Activated T-helper 2 cell treated with anti-CD3 and anti-CD28 coated beads, Interferon-gamma antibody, Interleukin-2, Interleukin-4, amounts not matched to agents 10 μg/mL and 5 μg/mL and 100 μg/mL, durations not matched to agents 14 hours and 24 hours and 36 hours (primary cell): ENCODE measurements at regions of chr3 and their contacts with region 1.

Region 1: GRCh38 chr3:48663415-48664312 is 978 bp upstream of the CELSR3 start:
- DNase-seq: peak; percentile 94
- H3K4me3 Mint-ChIP-seq: peak overlapping the region; percentile 90
- H3K27ac Mint-ChIP-seq: peak overlapping the region; percentile 99
- H3K4me1 Mint-ChIP-seq: peaks cover 10% of the 10 kb centered on the region
- H3K27me3 Mint-ChIP-seq: peaks cover 8% of the 10 kb centered on the region

Region 2: DNA sequence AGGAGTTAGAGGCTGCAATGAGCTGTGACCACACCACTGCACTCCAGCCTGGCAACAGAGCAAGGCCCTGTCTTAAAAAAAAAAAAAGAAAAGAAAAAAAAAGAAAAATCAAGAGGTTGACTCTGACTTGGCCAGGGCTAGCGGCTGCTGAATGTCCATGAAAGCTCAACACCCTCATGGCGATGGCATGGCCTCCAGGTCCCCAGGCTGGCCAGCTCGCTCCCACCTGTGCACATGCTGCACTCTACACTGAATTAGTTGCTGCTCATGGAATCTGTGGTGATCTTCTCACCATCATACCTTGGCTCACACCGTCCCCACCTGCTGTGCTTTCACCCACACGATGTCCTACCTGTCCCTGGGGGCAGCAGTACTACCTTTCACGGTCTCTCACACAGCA is 463.7 kb before region 1 on chr3:
- intact Hi-C with region 1: no loop called
- DNase-seq: no peak
- H3K4me3 Mint-ChIP-seq: no peak overlapping the region
- H3K27ac Mint-ChIP-seq: no peak overlapping the region
- H3K4me1 Mint-ChIP-seq: no peaks in the 10 kb centered on the region
- H3K27me3 Mint-ChIP-seq: peaks cover 6% of the 10 kb centered on the region

Region 3: DNA sequence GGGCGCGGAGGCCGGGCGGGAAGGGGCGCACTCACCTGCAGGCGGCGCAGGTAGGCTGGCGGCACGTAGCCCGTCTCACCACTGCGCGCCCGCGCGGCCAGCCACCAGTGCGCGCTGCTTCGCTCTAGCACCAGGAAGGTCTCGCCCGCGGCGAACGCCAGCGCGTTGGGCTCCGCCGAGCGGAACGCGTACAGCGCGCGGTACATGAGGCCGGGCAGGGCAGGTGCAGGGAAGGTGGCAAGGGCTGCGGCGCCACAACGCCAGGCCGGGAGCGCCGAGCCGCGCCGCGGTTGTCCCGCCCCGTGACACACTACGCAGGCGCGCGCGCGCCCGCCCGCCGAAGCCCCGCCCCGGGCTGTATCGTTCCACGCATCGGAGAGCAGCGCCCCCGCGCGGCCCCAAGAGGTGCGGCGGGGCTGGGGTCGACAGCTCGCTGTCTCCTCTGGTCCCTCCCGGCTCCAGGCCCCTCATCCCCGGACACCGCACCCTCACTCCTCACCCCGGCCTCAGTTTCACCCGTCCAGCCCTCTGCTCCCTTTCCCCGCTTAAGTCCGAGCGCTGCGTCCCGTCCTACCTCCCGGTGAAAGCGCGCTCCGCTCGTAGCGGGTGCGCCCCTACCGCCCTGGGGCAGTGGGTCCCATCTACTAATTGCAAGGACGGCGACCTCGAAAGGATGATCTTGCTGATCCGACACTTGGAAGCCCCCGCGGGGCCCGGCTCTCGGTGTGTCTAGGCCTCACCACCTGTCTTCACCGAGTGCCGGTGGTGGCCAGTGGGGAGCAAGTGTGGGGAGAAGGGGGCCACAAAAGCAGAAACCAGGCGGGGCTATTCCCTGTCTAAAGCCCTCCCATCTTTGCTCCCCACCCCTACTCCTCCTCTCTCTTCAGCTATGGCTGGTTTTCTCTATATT is 22.2 kb after region 1 on chr3 and contains the start of gene NCKIPSD:
- intact Hi-C with region 1: loop called (anchors 2 kb)
- DNase-seq: peak; percentile 84
- H3K4me3 Mint-ChIP-seq: peak within 1 kb of the TSS; percentile 95
- H3K27ac Mint-ChIP-seq: peak within 1 kb of the TSS; percentile 89
- H3K4me1 Mint-ChIP-seq: peaks cover 15% of the 10 kb centered on the region
- H3K27me3 Mint-ChIP-seq: no peaks in the 10 kb centered on the region
- total RNA-seq, gene NCKIPSD: 49.8 and 51.4 TPM in 2 replicates